Naive thymus-derived CD8-positive, alpha-beta T cell (primary cell): ENCODE measurements at regions of chr2 and their contacts with region 1.

Region 1: GRCh38 chr2:111058264-111058663 is 62.5 kb upstream of the BCL2L11 start:
- DNase-seq: no peak
- ATAC-seq: no peak
- H3K4me3 Mint-ChIP-seq: no peak overlapping the region
- H3K27ac Mint-ChIP-seq: peak overlapping the region in 1 of 10 donors; percentile 47
- H3K4me1 Mint-ChIP-seq: peaks cover 12 to 43% (median 16%) of the 10 kb centered on the region in 4 donors
- H3K27me3 Mint-ChIP-seq: peaks cover 0 to 3% (median 0%) of the 10 kb centered on the region in 5 donors

Region 2: GRCh38 chr2:110993557-110994231 is 64.6 kb before region 1 on chr2:
- POLR2A ChIA-PET with region 1: no interaction called
- DNase-seq: peak in 1 of 10 donors; percentile 17
- ATAC-seq: peak; percentile 62 to 65
- H3K4me3 Mint-ChIP-seq: peak overlapping the region; percentile 38 to 73 (median 60)
- H3K27ac Mint-ChIP-seq: peak overlapping the region in 8 of 10 donors; percentile 30 to 84 (median 71)
- H3K4me1 Mint-ChIP-seq: peaks cover 5 to 30% (median 21%) of the 10 kb centered on the region in 4 donors
- H3K27me3 Mint-ChIP-seq: no peaks in the 10 kb centered on the region

Region 3: GRCh38 chr2:111011218-111011617 is 47.0 kb before region 1 on chr2:
- POLR2A ChIA-PET with region 1: interaction called, 10 read pairs
- DNase-seq: no peak
- ATAC-seq: no peak
- H3K4me3 Mint-ChIP-seq: no peak overlapping the region
- H3K27ac Mint-ChIP-seq: no peak overlapping the region
- H3K4me1 Mint-ChIP-seq: peaks cover 0 to 5% (median 2%) of the 10 kb centered on the region in 4 donors
- H3K27me3 Mint-ChIP-seq: peaks cover 0 to 14% (median 0%) of the 10 kb centered on the region in 5 donors